MCF 10A (cell line): ENCODE measurements at regions of chr7 and their contacts with region 1.

Region 1: DNA sequence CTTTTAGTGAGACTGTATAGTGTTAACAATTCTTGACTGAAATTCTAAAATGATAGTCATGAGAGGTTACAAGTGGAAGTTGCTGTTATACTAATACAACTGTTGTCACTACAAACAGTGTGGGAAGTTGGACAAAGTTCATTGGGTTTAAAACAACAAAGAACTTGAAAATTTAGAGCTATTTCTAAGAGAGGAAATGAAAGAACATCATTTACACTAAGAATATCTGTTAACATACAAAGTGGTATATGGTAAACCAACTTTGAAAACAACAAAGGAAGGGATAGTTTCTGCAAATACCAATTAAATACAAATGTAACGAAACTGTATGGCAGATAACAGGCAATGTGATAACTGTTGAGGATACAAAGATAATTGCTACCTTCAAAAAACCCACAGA is 11.6 kb downstream of the MTPN start:
- DNase-seq: no peak
- H3K4me3 Mint-ChIP-seq: no peak overlapping the region
- H3K27ac Mint-ChIP-seq: no peak overlapping the region
- H3K4me1 Mint-ChIP-seq: peaks cover 25% of the 10 kb centered on the region
- H3K27me3 Mint-ChIP-seq: no peaks in the 10 kb centered on the region
- CTCF ChIP-seq: no peak

Region 2: GRCh38 chr7:135977007-135977741 is 11.6 kb after region 1 on chr7 and contains the start of gene MTPN:
- CTCF ChIA-PET with region 1: interaction called, 3 read pairs
- POLR2A ChIA-PET with region 1: interaction called, 13 read pairs
- intact Hi-C with region 1: no loop called
- DNase-seq: peak; percentile 99
- H3K4me3 Mint-ChIP-seq: peak within 1 kb of the TSS; percentile 83
- H3K27ac Mint-ChIP-seq: peak within 1 kb of the TSS; percentile 81
- H3K4me1 Mint-ChIP-seq: peaks cover 39% of the 10 kb centered on the region
- H3K27me3 Mint-ChIP-seq: no peaks in the 10 kb centered on the region
- CTCF ChIP-seq: no peak
- total RNA-seq, gene MTPN: 153 and 178 TPM in 2 replicates